ENCODE measurements at regions of chr18 and their contacts with region 1.

Region 1: GRCh38 chr18:73456643-73457042 is 588.9 kb upstream of the NETO1 start:
- DNase-seq: no peak
- ATAC-seq: no peak

Region 2: DNA sequence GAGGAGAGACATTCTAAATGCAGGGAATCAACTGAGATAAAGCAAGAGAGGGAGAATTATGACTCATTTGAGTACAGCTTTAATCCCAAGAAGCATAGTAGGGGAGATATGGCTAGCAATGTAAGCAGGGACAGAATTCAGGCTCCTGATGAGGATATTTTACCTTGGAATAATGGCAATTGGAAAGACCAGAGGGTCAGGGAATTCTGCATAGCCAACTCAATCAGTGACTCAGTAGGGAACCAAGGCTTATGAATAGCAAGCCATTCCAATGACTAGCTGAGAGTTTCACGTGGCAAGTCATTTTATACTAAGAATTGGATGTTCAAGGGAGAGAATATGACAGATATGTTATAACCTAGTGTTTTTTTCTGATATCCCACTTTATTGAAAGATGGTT is 25.0 kb before region 1 on chr18:
- intact Hi-C with region 1: loop called in 1 of 2 experiments (anchors 1 kb)
- DNase-seq: no peak
- ATAC-seq: no peak